AG04449 (cell line): ENCODE measurements at regions of chr22 and their contacts with region 1.

Region 1: GRCh38 chr22:31230871-31231621 is 18.9 kb downstream of the LIMK2 start:
- DNase-seq: no peak
- H3K4me3 ChIP-seq: no peak overlapping the region
- CTCF ChIP-seq: peak; percentile 68

Region 2: GRCh38 chr22:31080848-31081649 is 150.0 kb before region 1 on chr22 and contains the start of gene SMTN:
- CTCF ChIA-PET with region 1: interaction called, 37 read pairs
- POLR2A ChIA-PET with region 1: no interaction called
- DNase-seq: no peak
- H3K4me3 ChIP-seq: peak within 1 kb of the TSS; percentile 88
- CTCF ChIP-seq: no peak

Region 3: DNA sequence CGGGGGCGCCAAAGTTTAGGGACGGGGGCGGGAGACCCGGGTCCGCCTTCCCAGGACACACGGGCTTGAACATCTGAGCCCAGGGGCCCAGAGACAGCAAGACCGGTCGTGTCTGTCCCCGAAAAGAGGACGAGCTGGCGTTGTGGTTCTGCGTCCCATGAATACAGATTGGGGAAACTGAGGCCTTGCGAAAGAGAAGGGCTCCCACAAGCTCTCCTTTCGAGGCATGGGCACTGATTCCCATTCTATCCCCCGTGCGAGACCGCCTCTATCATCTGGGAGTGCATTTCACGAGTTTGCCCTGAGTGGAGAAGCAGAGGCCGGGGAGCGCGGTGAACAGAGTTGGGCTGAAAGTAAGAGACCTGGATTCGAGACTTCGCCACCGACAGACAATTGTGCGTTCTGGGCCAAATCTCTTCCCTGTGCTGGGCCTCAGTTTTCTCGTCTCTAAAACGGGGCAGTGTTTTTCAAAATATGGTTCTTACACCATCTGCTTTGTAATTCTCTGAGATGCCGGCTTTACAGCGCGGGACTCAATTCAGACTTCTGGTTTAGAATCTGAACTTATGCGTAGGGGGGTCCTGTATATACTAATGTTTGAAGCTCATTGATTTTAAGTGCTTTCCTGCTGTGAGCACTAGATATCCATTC is 70.6 kb before region 1 on chr22:
- CTCF ChIA-PET with region 1: interaction called, 10 read pairs
- POLR2A ChIA-PET with region 1: no interaction called
- DNase-seq: no peak
- H3K4me3 ChIP-seq: peak overlapping the region; percentile 93
- CTCF ChIP-seq: no peak

Region 4: DNA sequence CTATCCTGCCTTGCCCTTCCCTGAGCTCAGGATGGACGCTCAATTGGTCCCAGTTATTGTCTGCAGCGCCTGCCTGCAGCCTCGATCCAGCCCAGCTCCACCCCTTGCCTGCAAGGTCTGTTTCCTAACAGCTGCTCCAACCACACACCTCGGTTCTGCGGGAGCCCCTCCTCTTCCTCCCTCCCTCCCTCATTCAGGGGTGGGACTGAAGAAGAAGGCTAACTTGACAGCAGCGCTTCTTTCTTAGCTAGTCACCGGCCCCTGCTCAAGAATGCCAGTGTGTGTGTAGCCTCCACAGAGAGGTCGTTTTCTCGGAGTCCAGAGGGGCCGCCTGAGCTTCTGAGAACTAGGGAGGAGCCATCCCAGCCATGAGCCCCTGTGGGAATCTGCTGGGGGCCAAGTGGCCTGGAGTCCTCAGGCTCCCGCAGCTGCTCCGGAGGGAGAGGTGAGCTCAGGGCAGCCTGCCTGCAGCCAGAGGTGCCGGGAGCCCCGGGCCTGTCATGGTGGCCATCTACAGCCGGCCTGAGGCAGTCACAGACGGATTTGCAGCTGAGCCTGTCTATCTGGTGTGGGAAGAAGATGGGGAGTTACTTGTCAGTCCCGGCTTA is 17.2 kb after region 1 on chr22:
- CTCF ChIA-PET with region 1: interaction called, 66 read pairs
- POLR2A ChIA-PET with region 1: no interaction called
- DNase-seq: peak; percentile 74
- H3K4me3 ChIP-seq: peak overlapping the region; percentile 72
- CTCF ChIP-seq: no peak

Region 5: DNA sequence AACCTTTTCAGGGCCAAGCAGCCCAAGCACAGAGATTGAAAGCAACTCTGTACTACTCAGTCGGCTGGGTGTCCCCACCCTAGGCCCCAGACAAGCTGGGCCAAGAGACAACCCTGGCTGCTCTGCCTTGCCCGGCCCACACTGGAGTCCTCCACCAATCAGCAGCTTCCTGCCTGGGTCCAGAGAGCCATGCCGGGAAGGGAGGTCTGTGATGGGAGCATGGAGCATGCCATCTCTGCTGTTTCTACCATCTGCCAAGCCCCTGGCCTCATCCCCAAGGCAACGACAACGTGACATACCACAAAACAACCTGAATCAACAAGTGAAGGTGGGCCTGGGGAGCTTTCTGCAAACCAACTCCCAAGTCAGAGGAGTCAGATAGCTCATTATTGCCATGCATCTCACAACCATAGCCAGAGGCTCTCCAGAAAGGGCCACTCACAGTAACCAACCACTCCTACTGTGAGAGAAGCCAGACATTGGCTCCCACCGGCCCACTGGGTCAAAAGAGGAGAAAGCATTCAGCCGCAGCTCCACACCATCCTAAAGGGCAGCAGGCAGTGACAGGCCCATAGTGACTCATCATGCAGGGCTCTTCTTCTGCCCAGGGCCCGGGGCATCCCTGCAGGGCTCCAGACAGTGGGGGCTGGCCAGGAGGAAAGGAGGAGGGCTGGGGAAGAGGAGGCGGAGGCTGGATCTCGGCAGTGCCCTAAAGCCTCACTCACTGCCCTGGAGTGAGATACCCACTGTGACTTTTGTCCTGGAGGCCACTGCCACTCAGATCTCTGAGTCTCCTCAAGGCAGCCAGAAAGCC is 97.0 kb after region 1 on chr22:
- CTCF ChIA-PET with region 1: no interaction called
- POLR2A ChIA-PET with region 1: no interaction called
- DNase-seq: no peak
- H3K4me3 ChIP-seq: no peak overlapping the region
- CTCF ChIP-seq: no peak

Region 6: GRCh38 chr22:31439808-31440207 is 208.8 kb after region 1 on chr22:
- CTCF ChIA-PET with region 1: no interaction called
- POLR2A ChIA-PET with region 1: no interaction called
- DNase-seq: no peak
- H3K4me3 ChIP-seq: no peak overlapping the region
- CTCF ChIP-seq: no peak